Common myeloid progenitor, CD34-positive (primary cell): ENCODE measurements at regions of chr12 and their contacts with region 1.

Region 1: GRCh38 chr12:97308576-97309198 is 153.9 kb upstream of the RMST start:
- DNase-seq: peak; percentile 62 to 85 (median 78)
- H3K4me3 ChIP-seq: no peak overlapping the region
- H3K27ac ChIP-seq: no peak overlapping the region
- H3K4me1 ChIP-seq: no peaks in the 10 kb centered on the region
- H3K27me3 ChIP-seq: peaks cover 0 to 6% (median 5%) of the 10 kb centered on the region in 5 experiments

Region 2: GRCh38 chr12:96986883-96987523 is 321.7 kb before region 1 on chr12:
- CTCF ChIA-PET with region 1: interaction called, 31 read pairs
- POLR2A ChIA-PET with region 1: no interaction called
- DNase-seq: peak; percentile 50 to 58 (median 53)
- H3K4me3 ChIP-seq: no peak overlapping the region
- H3K27ac ChIP-seq: no peak overlapping the region
- H3K4me1 ChIP-seq: peaks cover 0 to 10% (median 5%) of the 10 kb centered on the region in 4 experiments
- H3K27me3 ChIP-seq: peaks cover 0 to 22% (median 8%) of the 10 kb centered on the region in 5 experiments